ENCODE measurements at regions of chr2 and their contacts with region 1.

Region 1: DNA sequence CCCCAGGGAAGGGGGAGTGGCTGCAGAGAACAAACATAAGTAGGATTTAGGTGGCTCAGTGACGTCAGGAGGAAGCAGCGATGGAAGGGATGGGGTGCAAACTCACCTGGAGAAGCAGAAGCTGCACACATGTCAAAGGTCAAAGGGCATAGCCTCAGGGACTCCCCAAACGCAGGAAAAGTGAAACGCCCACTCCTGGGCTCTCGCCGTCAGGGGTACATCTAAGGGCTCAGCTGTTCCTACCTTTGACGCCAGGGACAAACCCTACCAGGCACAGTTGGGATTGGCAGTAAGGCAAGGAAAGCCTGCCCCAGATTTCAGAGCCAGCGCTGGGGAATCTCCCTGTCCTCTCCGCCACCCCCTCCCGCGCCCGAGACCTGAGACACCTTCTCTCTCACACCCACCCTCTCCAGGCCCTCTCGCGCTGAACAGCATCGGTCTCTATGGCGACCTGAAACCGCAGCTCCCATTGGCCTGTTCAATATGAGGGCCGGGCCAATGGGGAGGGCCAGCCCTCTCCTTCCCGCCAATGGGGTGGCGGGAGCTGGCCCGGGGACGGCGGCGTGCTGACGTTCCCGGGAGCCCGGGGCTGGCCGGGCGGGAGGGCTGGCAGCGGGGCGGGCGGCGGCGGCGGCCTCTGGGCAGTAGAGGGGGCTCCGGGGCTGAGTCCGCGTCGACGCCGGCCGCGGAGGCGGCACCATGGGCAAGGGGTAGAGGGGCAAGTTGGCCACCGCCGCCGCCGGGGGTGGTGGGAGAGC is at the starts of genes CCDC148 and PKP4:
- DNase-seq: peak; percentile 88 to 96 (median 91)
- H3K4me3 ChIP-seq: peak within 1 kb of the TSS; percentile 37 to 97 (median 64)
- H3K27ac ChIP-seq: peak within 1 kb of the TSS; percentile 68 to 96 (median 94)
- H3K4me1 ChIP-seq: peaks cover 0 to 17% of the 10 kb centered on the region in 2 donors
- H3K27me3 ChIP-seq: no peaks in the 10 kb centered on the region
- CTCF ChIP-seq: peak in 5 of 6 experiments; percentile 28 to 60 (median 43)
- POLR2A ChIP-seq: peak; percentile 21 to 69
- total RNA-seq, gene CCDC148: 0.24 to 1.6 (median 0.72) TPM in 7 of 9 donors, not detected in the others
- total RNA-seq, gene PKP4: 15.6 to 34.9 (median 23.9) TPM

Region 2: GRCh38 chr2:158034199-158034866 is 422.2 kb before region 1 on chr2:
- intact Hi-C with region 1: loop called in 1 of 2 experiments (anchors 10 kb)
- DNase-seq: peak; percentile 57 to 83 (median 69)
- H3K4me3 ChIP-seq: no peak overlapping the region
- H3K27ac ChIP-seq: no peak overlapping the region
- H3K4me1 ChIP-seq: peaks cover 0 to 5% of the 10 kb centered on the region in 2 donors
- H3K27me3 ChIP-seq: no peaks in the 10 kb centered on the region
- CTCF ChIP-seq: peak; percentile 41 to 76 (median 66)
- POLR2A ChIP-seq: no peak

Region 3: DNA sequence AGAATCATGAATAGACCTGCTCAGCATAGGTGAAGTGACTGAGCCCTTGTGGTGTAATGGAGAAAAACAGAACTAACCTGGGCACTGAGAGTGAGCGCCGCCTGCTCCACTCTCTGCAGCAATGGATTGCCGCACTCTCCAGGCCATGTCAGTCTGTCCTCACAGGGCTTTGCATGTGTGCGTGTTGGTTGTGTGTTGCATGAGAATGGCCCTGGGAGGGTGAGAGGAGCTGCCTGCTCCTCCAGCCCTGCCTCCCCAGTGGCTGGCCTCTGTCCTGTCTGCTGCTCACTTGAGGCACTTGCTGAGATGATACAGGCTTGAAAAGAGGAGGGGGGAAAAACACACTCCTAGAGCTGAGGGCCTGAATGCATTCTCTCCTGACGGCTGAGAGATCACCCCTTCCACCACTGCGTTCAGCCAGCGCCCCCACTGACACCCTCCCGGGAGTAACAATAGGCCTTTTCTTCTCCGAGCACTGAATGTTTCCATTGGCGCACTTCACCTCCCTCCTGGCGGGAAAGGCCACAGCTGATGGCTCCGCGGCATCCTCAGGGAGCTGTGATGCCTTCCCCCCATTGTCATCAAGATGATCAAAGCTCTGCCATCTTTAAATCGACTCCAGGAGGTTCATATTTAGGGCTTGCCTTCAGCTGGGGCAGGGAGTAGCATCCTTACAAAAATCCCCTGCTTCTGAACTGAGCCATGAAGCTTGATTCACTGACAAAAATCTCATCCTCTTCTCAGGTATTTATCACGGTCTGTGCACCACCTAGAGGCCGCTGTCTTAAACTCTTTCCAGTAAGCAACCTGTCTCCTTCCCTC is 288.8 kb after region 1 on chr2:
- intact Hi-C with region 1: loop called in 1 of 2 experiments (anchors 10 kb)
- DNase-seq: peak; percentile 32 to 84 (median 57)
- H3K4me3 ChIP-seq: no peak overlapping the region
- H3K27ac ChIP-seq: no peak overlapping the region
- H3K4me1 ChIP-seq: peaks cover 10 to 14% of the 10 kb centered on the region in 2 donors
- H3K27me3 ChIP-seq: no peaks in the 10 kb centered on the region
- CTCF ChIP-seq: peak; percentile 37 to 67 (median 54)
- POLR2A ChIP-seq: no peak